SK-N-SH (cell line): ENCODE measurements at regions of chr2 and their contacts with region 1.

Region 1: DNA sequence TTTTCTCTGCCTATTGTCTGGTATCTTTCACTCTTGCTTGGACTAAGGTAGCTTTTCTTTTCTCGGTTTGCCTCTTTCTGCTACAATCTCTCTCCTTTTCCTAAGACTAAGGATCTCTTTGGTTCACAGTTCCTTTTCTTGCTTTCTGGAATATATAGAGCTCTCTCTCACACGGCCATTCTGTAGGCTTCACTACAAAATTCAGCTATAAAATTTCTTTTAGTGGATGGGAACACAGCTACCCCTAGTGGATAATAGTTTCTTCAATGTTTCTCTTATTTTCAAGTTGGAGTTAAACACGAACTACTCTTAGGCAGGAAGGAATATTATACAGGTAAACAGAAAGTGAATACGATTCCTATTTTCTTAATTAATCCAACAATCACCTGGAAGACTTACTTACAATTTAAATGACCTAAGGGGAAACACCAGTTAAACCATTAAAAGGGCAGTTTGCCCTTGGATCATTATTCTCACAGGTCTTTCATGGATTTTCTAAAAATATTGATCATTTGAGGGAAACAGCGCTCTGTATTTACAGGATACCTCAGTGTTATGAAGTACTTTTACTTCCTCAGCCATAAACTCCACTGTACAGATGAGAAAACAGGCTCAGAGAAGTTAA is 140.5 kb downstream of the LRP2 start:
- DNase-seq: peak; percentile 14
- H3K4me3 ChIP-seq: peak overlapping the region in 1 of 2 experiments; percentile 16; a peak in 1 of 4 replicates
- H3K27ac ChIP-seq: no peak overlapping the region
- H3K4me1 ChIP-seq: no peaks in the 10 kb centered on the region
- H3K27me3 ChIP-seq: no peaks in the 10 kb centered on the region
- CTCF ChIP-seq: peak; percentile 60
- EP300 ChIP-seq: no peak
- RAD21 ChIP-seq: peak; percentile 55

Region 2: GRCh38 chr2:169203928-169204327 is 17.9 kb before region 1 on chr2:
- CTCF ChIA-PET with region 1: interaction called, 32 read pairs
- POLR2A ChIA-PET with region 1: no interaction called
- DNase-seq: no peak
- H3K4me3 ChIP-seq: no peak overlapping the region
- H3K27ac ChIP-seq: no peak overlapping the region
- H3K4me1 ChIP-seq: no peaks in the 10 kb centered on the region
- H3K27me3 ChIP-seq: no peaks in the 10 kb centered on the region
- CTCF ChIP-seq: no peak
- EP300 ChIP-seq: no peak
- RAD21 ChIP-seq: no peak

Region 3: DNA sequence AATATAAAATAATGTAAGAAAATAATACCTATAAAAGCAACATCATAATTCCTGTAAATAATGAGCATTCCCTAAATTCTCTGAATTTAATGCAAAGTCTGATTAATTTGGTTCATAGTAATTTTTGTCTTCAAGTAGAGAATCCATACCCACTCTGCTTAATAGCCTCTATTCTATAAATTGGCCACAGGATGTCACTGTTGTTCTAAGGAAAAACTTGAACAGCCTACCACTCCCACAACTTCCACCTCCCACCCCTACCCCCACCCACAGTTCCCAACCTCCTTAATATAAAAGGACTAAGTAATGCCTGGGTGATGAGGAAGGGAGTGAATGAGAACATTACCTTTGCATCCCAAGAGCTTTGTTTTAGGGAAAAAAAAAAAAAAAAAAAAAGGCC is 230.2 kb after region 1 on chr2:
- CTCF ChIA-PET with region 1: no interaction called
- POLR2A ChIA-PET with region 1: no interaction called
- DNase-seq: peak; percentile 52
- H3K4me3 ChIP-seq: no peak overlapping the region
- H3K27ac ChIP-seq: no peak overlapping the region
- H3K4me1 ChIP-seq: no peaks in the 10 kb centered on the region
- H3K27me3 ChIP-seq: peaks cover 6% of the 10 kb centered on the region; the same call in 1 of the 2 replicates
- CTCF ChIP-seq: peak; percentile 62
- EP300 ChIP-seq: no peak
- RAD21 ChIP-seq: peak; percentile 72